ENCODE measurements at regions of chr10 and their contacts with region 1.

Region 1: DNA sequence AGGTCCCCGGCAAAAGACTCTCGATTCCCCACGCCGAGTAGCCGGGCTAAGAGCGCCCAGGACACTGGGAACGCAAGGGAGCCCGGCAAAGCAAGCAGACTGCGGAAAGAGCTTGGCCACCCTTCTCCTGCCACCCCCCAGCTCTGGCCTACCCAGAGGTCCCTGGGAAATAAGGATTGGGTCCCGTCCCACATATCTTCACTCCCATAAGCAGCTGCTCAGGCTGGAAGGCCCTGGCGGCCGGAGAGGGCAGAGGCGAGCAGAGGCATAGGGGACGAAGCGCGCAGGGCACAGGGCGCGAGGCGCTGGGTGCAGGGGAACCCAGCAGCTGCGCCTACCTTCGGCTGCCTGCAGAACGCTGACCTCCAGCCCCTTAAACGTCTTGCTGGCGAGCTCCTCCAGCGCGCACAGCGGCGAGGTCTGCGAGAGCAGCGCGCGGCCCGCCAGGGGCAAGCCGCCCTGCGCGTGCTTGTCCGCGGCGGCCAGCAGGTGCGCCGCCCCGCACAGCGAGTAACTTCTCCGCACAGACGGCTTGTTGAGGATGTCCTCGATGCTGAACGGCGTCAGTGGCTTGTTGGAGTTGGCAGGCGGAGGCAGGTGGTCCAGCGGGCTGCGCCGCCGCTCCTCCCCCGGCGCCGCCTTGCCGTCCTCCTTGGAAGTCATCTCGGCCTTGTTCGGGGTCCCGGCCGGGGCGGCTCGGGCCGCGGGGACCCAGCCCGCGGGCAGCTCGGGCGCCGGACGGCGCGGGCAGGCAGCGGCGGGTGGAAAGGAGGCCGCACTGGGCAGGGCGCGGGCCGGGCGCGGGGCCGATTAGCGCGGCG is 900 bp downstream of the LBX1 start:
- DNase-seq: no peak
- ATAC-seq: no peak
- H3K4me3 Mint-ChIP-seq: no peak overlapping the region
- H3K27ac Mint-ChIP-seq: no peak overlapping the region
- H3K4me1 Mint-ChIP-seq: peaks cover 35% of the 10 kb centered on the region
- H3K27me3 Mint-ChIP-seq: peaks cover 70% of the 10 kb centered on the region

Region 2: GRCh38 chr10:100653957-100654781 is 574.2 kb before region 1 on chr10:
- CTCF ChIA-PET with region 1: no interaction called
- POLR2A ChIA-PET with region 1: no interaction called
- intact Hi-C with region 1: loop called in 1 of 2 experiments (anchors 5 kb)
- DNase-seq: peak; percentile 72
- ATAC-seq: peak; percentile 48
- H3K4me3 Mint-ChIP-seq: peak overlapping the region; percentile 62
- H3K27ac Mint-ChIP-seq: peak overlapping the region; percentile 12
- H3K4me1 Mint-ChIP-seq: peaks cover 20% of the 10 kb centered on the region
- H3K27me3 Mint-ChIP-seq: peaks cover 58% of the 10 kb centered on the region

Region 3: GRCh38 chr10:100730725-100731406 is 497.5 kb before region 1 on chr10:
- CTCF ChIA-PET with region 1: no interaction called
- POLR2A ChIA-PET with region 1: no interaction called
- intact Hi-C with region 1: loop called in 1 of 2 experiments (anchors 5 kb)
- DNase-seq: peak; percentile 73
- ATAC-seq: peak; percentile 68
- H3K4me3 Mint-ChIP-seq: peak overlapping the region; percentile 32
- H3K27ac Mint-ChIP-seq: no peak overlapping the region
- H3K4me1 Mint-ChIP-seq: peaks cover 33% of the 10 kb centered on the region
- H3K27me3 Mint-ChIP-seq: peaks cover 84% of the 10 kb centered on the region

Region 4: GRCh38 chr10:100827819-100828737 is 400.3 kb before region 1 on chr10:
- CTCF ChIA-PET with region 1: no interaction called
- POLR2A ChIA-PET with region 1: no interaction called
- intact Hi-C with region 1: loop called in 1 of 2 experiments (anchors 10 kb)
- DNase-seq: peak; percentile 62
- ATAC-seq: peak; percentile 48
- H3K4me3 Mint-ChIP-seq: peak overlapping the region; percentile 70
- H3K27ac Mint-ChIP-seq: no peak overlapping the region
- H3K4me1 Mint-ChIP-seq: peaks cover 24% of the 10 kb centered on the region
- H3K27me3 Mint-ChIP-seq: peaks cover 66% of the 10 kb centered on the region

Region 5: DNA sequence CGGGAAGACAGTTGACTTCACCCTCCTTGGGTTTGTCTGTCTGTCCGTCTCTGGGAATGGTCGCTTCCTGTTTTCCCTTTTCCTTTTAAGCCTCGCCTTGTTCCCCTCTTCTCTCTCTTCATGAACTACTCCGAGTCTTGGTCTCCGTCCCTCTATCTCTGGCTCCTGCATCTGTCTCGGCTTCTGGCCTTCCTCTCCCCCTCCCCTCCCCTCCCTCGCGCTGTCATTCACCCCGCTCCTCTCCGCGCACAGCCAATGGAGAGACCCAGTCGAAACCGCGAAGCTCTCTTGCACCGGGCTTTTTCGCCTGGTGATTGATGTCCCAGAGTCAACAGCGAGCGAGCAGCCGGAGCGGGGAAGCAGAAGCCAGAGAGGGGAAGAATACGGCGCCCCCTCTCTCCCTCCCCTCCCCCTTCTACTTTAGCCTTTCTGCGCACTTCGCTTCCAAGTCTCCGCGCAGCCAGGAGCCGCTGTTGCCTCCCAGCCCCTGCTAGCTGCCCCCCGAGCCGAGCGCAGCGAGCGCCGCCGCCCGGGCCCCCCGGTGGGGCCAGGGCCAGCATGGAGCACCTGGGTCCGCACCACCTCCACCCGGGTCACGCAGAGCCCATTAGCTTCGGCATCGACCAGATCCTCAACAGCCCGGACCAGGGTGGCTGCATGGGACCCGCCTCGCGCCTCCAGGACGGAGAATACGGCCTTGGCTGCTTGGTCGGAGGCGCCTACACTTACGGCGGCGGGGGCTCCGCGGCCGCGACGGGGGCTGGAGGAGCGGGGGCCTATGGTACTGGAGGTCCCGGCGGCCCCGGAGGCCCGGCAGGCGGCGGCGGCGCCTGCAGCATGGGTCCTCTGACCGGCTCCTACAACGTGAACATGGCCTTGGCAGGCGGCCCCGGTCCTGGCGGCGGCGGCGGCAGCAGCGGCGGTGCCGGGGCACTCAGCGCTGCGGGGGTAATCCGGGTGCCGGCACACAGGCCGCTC is 97.1 kb before region 1 on chr10 and contains the start of gene TLX1:
- CTCF ChIA-PET with region 1: no interaction called
- POLR2A ChIA-PET with region 1: no interaction called
- intact Hi-C with region 1: loop called in 1 of 2 experiments (anchors 2 kb)
- DNase-seq: peak; percentile 41
- ATAC-seq: no peak
- H3K4me3 Mint-ChIP-seq: peak within 1 kb of the TSS; percentile 21
- H3K27ac Mint-ChIP-seq: no peak within 1 kb of the TSS
- H3K4me1 Mint-ChIP-seq: peaks cover 24% of the 10 kb centered on the region
- H3K27me3 Mint-ChIP-seq: peaks cover 76% of the 10 kb centered on the region
- total RNA-seq, gene TLX1: not detected